GM13976 (cell line): ENCODE measurements at regions of chr13 and their contacts with region 1.

Region 1: GRCh38 chr13:40789275-40790133 is at the start of gene SLC25A15:
- DNase-seq: peak; percentile 88
- CTCF ChIP-seq: peak; percentile 63

Region 2: GRCh38 chr13:40922437-40923040 is 133.0 kb after region 1 on chr13:
- in situ Hi-C with region 1: loop called (anchors 10 kb)
- DNase-seq: no peak
- CTCF ChIP-seq: no peak

Region 3: GRCh38 chr13:40974460-40975407 is 185.2 kb after region 1 on chr13:
- in situ Hi-C with region 1: no loop called
- DNase-seq: no peak
- CTCF ChIP-seq: peak; percentile 54

Region 4: DNA sequence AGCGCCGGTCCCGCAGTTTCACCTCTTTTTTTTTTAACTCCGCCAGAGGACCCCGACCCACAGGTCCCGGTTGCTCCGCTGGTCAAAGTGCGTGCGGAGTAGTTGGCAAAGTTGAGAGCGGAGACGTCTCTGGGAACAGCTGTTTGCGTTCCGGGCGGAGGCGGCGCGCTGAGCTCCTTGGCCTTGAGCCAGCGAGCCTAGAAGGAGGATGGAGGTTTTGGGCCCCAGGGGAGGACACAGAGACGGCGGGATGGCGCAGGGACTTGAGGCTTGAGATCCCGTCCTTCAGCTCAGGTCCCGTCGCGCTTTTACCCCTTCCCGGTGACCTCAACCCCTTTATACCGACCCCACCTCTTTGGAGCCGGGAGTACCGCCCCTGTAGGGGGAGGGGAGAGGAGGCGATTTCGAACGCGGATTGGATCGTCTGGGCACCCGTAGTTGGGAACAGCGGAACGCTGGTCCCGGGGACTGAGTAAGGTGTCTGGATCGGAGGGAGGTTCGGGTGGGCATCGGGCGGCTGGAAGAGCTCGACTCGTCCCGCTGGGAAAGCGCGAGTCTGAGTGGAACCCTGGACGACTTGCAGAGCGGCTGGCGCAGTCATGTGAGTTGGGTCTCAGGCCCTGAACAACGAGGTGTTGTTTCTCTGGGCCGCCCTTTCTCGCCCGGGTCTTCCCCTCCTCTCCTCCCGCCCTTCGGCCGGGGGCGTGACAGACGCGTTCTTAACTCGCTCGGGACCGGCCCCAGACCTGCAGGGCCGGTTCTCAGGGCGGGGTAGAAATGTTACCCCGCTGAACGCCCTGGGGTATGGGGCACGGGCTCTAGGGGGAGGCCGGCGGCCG is 271.8 kb after region 1 on chr13 and contains the start of gene WBP4:
- in situ Hi-C with region 1: loop called (anchors 25 kb)
- DNase-seq: peak; percentile 94
- CTCF ChIP-seq: peak; percentile 17